GM18951 (cell line): ENCODE measurements at regions of chr5 and their contacts with region 1.

Region 1: DNA sequence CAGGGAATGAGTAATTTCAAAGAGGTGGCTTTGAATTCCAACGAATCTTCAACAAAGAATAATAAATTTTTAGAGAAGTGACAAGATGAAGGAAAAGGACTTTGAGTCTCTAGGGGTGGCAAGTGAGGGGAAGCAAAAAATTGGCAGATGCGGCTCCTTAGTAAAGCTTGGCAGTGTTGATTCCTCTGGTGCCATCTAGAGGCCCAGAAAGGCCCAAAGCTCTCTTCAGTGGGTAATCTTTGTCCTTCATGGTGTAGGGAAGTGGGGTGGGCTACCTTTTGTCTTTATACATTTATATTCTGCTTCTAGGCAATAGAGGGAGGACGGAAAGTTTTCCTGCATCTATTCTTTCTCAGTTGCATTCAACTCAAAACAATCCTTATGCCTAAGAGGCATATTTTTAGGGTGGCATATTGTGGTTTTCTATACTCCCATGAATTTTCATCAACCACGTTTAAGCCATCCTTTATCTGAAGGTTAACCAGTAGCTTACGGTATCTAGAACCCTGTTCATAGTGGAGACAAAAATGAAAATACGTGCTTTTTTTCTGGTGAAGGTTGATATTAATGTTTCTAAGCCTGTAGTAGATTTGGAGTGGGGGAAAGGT is 17.5 kb upstream of the ROPN1L start:
- POLR2A ChIP-seq: no peak

Region 2: GRCh38 chr5:10123254-10123989 is 300.8 kb before region 1 on chr5:
- in situ Hi-C with region 1: no loop called
- POLR2A ChIP-seq: no peak

Region 3: GRCh38 chr5:10283927-10284635 is 140.1 kb before region 1 on chr5:
- in situ Hi-C with region 1: loop called (anchors 25 kb)
- POLR2A ChIP-seq: no peak

Region 4: DNA sequence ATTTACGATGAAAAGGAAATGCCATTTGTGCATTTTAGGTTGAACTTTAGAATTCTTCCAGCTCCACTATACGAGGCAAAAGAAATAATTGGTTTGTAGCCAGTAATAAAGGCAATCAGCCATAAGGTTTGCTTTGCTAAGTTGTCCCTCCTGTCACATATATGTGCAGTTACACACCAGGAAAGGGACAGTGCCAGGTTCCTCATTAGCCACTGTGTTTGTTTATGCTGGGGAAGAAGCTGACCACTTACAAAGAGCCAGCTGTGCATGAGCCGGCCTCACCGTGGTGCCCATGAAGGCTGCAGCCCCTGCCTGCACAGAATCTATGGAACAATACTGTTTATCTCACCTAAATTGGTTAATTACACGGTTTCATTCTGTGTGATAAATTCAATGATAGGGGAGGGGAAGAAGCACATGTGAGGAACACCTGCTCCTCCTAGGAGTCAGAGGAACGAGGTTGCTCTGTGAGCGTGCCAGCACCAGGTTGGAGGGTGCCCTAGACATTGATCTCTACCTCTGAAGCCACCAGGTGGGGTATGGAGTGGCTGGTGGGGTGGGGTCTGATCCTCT is 510.6 kb after region 1 on chr5:
- in situ Hi-C with region 1: no loop called
- POLR2A ChIP-seq: no peak